PC-3 (cell line): ENCODE measurements at regions of chr9 and their contacts with region 1.

Region 1: DNA sequence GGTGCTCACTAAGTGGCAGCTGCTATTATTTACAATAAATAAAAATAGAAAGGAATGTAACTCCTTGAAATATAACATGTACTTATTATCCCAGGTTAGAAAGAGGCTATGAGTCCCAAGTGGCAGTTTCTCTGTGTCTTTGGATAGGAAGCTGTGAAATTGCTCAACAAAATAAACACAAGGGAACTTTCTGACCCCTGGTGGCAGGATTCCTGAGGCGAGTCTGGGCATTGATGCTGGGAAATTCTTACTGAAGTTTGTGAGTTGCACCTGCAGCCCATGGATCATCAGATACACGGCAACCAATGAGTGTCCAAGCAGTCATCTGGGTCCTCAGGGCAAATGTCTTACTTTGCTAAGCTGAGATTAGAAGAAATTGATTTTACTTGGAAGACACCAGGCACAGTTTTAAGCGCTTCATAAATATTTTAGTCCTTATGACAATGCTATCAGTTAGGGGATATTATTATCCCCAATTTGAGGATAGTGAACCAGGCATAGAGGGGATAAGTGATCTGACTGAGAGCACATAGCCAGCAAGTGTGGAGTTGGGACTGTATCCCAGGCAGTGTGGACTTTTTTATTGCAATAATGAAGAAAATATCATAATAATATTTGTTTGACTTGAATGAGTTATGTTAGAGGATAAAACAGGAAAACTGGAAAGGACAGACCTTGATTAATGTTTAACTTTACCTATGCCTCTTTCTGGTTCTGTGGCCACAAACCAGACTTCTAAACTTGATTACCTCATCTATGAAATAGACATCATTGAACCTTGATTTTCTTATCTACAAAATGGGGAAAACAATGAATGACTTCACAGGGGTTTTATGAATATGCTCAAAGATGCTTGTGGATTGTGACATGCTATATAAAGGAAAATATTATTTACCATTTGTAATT is 265.5 kb upstream of the ADAMTSL1 start:
- DNase-seq: peak; percentile 77
- ATAC-seq: peak; percentile 69
- H3K4me3 ChIP-seq: no peak overlapping the region
- H3K27ac ChIP-seq: no peak overlapping the region
- H3K4me1 ChIP-seq: peaks cover 4% of the 10 kb centered on the region; the same call in 1 of the 2 replicates
- H3K27me3 ChIP-seq: no peaks in the 10 kb centered on the region
- CTCF ChIP-seq: peak; percentile 71

Region 2: GRCh38 chr9:18149471-18150011 is 58.9 kb before region 1 on chr9:
- CTCF ChIA-PET with region 1: interaction called, 6 read pairs
- POLR2A ChIA-PET with region 1: no interaction called
- intact Hi-C with region 1: loop called (anchors 1 kb)
- DNase-seq: peak; percentile 21
- ATAC-seq: peak; percentile 45
- H3K4me3 ChIP-seq: no peak overlapping the region
- H3K27ac ChIP-seq: no peak overlapping the region
- H3K4me1 ChIP-seq: no peaks in the 10 kb centered on the region
- H3K27me3 ChIP-seq: peaks cover 13% of the 10 kb centered on the region
- CTCF ChIP-seq: peak; percentile 43; the same call in 1 of the 2 replicates